Activated CD4-positive, alpha-beta memory T cell treated with anti-CD3 and anti-CD28 coated beads for 36 hours (primary cell): ENCODE measurements at regions of chr3 and their contacts with region 1.

Region 1: DNA sequence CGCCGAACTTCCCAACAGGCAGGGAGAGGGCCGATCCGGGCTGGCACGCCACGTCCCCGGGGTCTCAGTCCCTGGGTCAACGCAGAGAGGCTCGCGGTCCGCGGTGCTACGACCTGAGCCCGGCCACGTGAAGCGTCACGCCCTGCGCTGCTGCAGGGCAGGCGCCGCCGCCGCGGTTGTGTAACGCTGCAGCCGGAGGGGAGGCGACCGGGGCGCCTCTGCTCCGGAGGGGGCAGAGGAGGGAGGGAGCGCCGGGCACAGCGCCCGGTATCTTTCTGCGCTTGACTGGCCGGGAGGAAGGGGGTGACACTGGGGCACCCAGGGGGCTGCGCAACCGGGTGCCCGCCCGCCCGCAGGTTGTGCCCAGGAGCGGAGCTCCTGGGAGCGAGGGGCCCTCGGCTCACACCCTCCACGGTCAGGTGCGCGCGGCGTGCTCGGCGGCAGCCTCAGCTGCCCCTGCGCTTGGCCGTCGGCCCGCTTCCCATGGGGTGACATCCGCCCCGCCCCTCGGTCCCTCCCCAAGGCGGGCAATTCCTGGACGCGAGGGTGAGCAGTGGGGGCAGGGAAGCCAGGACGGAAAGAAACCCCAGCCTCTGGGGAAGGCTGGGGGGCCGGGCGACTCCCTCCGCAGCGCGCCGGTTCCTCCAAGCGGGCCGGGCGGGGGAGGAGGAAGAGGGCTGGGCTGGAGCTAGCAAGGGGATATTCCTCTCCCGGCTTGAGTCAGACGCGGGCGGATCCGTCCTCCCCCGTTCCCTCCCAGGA is 852 bp upstream of the BHLHE40 start:
- DNase-seq: peak; percentile 98
- H3K4me3 Mint-ChIP-seq: peak overlapping the region; percentile 87
- H3K27ac Mint-ChIP-seq: peak overlapping the region; percentile 99
- H3K4me1 Mint-ChIP-seq: peaks cover 48% of the 10 kb centered on the region
- H3K27me3 Mint-ChIP-seq: no peaks in the 10 kb centered on the region

Region 2: DNA sequence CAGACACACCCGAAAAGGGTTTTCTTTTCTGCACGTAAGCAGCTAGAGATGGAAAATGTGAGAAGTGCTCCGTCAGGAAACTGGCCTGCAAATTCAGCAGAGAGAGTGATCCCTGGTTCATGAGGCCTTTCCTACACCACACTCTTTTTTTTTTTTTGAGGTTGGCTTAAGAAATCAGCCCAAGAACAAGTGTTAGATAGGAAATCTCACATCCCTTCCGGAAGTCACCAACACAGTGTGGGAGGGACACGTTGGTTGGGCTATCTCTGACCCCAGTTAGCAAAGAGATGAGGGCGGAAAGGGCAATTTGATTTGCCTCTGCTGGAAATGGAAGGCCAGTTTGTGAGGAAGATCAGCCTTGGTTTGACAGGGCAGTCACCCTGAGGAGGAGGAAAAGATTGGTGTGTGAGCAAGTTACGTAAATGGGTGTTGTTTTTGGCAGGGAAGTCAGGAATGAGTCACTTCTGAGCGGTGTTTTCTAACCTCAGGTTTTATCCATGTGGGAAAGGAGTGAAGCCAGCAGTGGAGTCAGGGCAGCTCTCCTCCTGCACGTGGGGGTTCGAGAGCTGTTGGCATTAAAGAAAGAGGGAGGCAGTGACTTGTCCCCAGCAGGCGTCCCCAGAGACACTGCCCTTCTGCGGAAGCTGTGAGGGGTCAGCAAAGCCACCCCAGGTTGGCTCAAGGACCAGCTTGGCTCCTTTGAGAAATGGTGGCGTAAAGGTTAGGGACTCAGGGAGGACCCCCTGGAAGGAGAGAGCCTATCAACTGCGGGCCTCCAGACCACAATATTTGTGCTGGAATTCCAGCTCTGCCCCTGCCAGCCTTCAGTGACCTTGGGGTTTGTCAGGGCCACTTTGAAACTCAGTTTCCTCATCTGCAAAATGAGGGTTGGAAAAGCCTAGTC is 236.7 kb before region 1 on chr3:
- CTCF ChIA-PET with region 1: interaction called, 6 read pairs
- POLR2A ChIA-PET with region 1: interaction called, 15 read pairs
- intact Hi-C with region 1: loop called (anchors 2 kb)
- DNase-seq: peak; percentile 52
- H3K4me3 Mint-ChIP-seq: peak overlapping the region; percentile 3
- H3K27ac Mint-ChIP-seq: peak overlapping the region; percentile 85
- H3K4me1 Mint-ChIP-seq: peaks cover 51% of the 10 kb centered on the region
- H3K27me3 Mint-ChIP-seq: no peaks in the 10 kb centered on the region

Region 3: GRCh38 chr3:4834403-4834866 is 143.9 kb before region 1 on chr3:
- CTCF ChIA-PET with region 1: interaction called, 39 read pairs
- POLR2A ChIA-PET with region 1: interaction called, 83 read pairs
- intact Hi-C with region 1: loop called (anchors 1 kb)
- DNase-seq: peak; percentile 90
- H3K4me3 Mint-ChIP-seq: peak overlapping the region; percentile 49
- H3K27ac Mint-ChIP-seq: peak overlapping the region; percentile 84
- H3K4me1 Mint-ChIP-seq: peaks cover 86% of the 10 kb centered on the region
- H3K27me3 Mint-ChIP-seq: no peaks in the 10 kb centered on the region

Region 4: DNA sequence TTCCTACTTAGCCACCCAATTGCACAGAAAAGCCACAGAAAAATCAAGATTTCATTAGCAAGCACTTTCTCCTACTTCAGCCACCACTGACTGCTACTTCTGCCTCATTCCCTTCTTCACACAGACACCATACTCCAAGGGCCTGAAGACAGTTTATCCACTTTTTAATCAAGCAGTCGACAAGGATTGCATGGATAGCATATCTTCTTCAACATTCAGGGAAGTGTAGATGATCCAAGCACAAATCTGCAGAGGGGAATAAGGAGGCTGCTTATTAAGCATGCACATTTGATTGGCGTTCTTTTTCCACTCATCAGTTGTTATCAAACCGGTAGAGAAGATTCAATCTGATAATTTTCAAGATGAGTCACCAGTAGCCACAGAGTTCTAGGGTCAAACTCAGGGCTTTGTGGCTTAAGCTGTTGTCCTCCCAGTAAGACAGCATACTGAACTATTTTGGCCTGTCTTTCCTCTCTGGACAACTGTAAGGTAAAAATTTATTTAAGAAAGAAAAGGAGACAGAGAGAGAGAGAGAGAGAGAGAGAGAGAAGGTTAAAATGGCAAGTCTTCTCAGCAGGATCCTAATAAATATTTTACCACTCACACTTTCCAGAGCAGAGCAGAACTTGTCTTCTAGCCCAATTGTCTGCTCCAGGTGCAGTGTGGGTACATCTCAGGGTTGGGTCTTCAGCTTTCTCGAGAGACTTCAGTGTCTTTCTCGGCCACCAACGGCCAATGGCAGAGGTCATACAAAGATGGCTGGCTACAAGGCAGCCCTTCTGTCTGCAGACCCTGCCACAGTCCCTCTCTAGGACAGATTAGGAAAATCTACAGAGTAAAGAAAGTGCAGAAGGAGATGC is 79.7 kb before region 1 on chr3:
- CTCF ChIA-PET with region 1: interaction called, 12 read pairs
- POLR2A ChIA-PET with region 1: interaction called, 6 read pairs
- intact Hi-C with region 1: loop called (anchors 2 kb)
- DNase-seq: peak; percentile 25
- H3K4me3 Mint-ChIP-seq: peak overlapping the region; percentile 51
- H3K27ac Mint-ChIP-seq: peak overlapping the region; percentile 79
- H3K4me1 Mint-ChIP-seq: peaks cover 52% of the 10 kb centered on the region
- H3K27me3 Mint-ChIP-seq: no peaks in the 10 kb centered on the region

Region 5: DNA sequence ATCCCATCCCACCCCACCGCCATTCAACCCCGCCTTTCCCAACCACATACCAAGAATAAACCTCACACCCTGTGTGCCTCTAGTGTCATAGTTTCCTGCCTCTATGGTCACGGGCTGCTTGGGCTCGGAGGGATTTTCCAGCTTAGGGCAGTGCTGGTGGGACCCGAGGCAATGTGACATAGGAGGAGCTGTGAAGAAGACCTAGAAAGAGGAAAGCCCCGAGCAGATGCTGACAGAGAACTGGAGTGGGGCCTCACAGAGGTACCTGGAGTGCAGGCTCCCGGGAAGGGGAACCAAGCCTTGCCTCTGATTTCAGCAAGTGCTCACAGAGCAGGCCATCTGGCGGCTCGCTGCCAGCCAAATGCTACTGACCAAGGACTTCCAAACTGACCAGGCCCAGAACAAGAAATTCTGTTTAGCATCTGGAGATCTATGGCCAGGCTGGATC is 28.4 kb after region 1 on chr3:
- CTCF ChIA-PET with region 1: interaction called, 10 read pairs
- POLR2A ChIA-PET with region 1: interaction called, 31 read pairs
- intact Hi-C with region 1: loop called (anchors 1 kb)
- DNase-seq: peak; percentile 94
- H3K4me3 Mint-ChIP-seq: peak overlapping the region; percentile 25
- H3K27ac Mint-ChIP-seq: peak overlapping the region; percentile 81
- H3K4me1 Mint-ChIP-seq: peaks cover 52% of the 10 kb centered on the region
- H3K27me3 Mint-ChIP-seq: no peaks in the 10 kb centered on the region

Region 6: DNA sequence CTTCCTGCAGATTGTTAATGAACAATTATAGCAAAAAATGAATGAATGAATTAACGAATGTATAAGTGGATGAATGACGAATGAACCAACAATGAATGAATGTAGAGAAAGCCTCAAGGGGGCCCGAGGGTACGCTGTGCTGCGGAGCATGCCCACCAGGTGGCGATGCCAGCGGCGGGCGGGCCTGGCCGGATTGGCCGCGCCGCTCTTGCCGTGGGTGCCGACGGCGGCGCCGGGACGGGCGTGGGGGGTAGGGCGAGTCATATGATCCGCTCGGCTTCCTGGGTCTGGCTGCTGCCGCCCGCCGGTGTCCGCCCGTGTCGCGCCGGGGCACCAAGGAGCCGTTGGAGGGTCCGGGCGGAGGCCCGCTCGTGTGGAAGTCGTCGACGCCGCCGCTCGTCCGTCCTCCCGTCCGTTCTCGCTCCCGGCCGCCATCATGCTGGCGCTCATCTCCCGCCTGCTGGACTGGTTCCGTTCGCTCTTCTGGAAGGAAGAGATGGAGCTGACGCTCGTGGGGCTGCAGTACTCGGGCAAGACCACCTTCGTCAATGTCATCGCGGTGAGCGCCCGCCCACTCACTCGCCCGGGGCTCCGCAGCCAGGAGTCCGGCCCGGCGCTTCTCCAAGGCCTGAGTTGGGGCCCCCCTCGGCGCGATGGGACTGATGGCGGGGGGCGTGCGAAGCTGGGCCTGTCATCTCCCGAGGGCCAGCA is 143.8 kb after region 1 on chr3 and contains the start of gene ARL8B:
- CTCF ChIA-PET with region 1: interaction called, 4 read pairs
- POLR2A ChIA-PET with region 1: interaction called, 26 read pairs
- intact Hi-C with region 1: loop called (anchors 1 kb)
- DNase-seq: peak; percentile 95
- H3K4me3 Mint-ChIP-seq: peak within 1 kb of the TSS; percentile 85
- H3K27ac Mint-ChIP-seq: peak within 1 kb of the TSS; percentile 92
- H3K4me1 Mint-ChIP-seq: peaks cover 41% of the 10 kb centered on the region
- H3K27me3 Mint-ChIP-seq: no peaks in the 10 kb centered on the region
- total RNA-seq, gene ARL8B: 55.4 to 58.5 TPM